Activated CD4-positive, alpha-beta memory T cell treated with anti-CD3 and anti-CD28 coated beads, Interleukin-2, amount 10 ng/mL, durations not matched to agents 7 days and 5 days (primary cell): ENCODE measurements at regions of chr19 and their contacts with region 1.

Region 1: DNA sequence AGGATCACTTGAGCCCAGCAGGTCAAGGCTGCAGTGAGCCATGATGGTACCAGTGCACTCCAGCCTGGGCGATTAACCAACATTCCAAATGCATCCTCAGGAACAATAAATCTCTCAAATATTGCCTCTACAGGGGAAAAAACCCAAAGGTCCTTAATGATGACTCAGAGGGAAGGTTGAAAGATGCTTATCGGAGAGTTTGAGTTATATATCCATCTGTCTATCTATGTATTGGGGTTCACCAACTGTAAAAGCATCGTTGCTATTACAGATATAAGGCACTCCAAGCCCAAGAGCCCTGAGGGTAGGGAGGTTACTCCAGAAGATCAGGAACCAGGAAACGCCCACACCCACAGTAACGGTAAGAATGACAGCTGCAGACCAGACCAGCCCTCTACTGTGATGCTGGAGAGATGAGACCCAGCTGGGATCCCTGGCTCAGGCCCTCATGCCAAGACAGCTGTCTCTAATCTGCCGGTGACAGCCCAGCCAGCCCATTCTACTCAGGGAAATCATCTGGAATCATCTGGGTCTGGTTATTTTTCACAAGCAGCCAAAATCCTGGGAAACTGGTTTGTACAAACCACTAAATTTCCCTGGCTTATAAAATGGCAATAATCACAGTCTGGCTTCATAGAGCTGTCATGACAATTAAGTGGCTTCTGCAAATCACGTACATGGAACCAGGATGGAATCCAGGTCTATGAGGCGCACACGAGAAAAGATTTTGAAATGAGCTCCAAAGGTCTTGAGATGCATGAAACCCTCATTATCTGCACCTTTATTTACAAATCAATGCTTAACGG is 23.8 kb downstream of the TEX101 start:
- DNase-seq: peak; percentile 34
- H3K4me3 Mint-ChIP-seq: peak overlapping the region; percentile 37
- H3K27ac Mint-ChIP-seq: peak overlapping the region; percentile 97
- H3K4me1 Mint-ChIP-seq: peaks cover 41% of the 10 kb centered on the region
- H3K27me3 Mint-ChIP-seq: peaks cover 5% of the 10 kb centered on the region

Region 2: GRCh38 chr19:43463381-43464136 is 25.1 kb after region 1 on chr19:
- CTCF ChIA-PET with region 1: interaction called, 21 read pairs
- POLR2A ChIA-PET with region 1: interaction called, 23 read pairs
- DNase-seq: peak; percentile 99
- H3K4me3 Mint-ChIP-seq: peak overlapping the region; percentile 88
- H3K27ac Mint-ChIP-seq: peak overlapping the region; percentile 93
- H3K4me1 Mint-ChIP-seq: peaks cover 34% of the 10 kb centered on the region
- H3K27me3 Mint-ChIP-seq: peaks cover 12% of the 10 kb centered on the region

Region 3: DNA sequence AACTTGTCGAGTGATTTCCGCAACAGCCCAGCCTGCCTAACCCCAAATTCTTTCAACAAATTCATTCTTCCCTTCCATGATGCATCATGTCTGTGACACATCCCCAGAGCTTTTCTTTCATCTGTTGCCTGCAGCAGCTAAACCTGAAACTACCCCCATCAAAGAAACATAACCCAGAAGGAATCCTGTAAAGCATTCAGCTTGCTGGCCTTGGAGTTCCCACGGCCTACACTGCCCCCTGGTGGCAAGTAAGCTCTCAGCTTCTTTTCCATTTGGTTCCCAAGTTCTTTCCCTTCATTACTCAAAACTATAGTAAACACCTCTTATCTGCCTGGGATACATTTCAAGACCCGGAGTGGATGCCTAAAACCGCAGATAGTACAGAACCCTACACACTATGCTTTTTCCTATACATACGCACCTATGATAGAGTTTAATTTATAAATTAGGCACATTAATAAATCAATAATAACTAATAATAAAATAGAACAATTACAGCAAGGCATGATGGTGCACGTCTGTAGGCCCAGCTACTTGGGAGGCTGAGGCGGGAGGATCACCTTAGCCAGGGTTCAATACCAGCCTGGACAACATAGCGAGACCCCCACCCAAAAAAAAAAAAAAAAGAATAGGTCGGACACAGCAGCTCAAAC is 81.1 kb after region 1 on chr19:
- CTCF ChIA-PET with region 1: interaction called, 198 read pairs
- POLR2A ChIA-PET with region 1: interaction called, 23 read pairs
- DNase-seq: peak; percentile 80
- H3K4me3 Mint-ChIP-seq: no peak overlapping the region
- H3K27ac Mint-ChIP-seq: no peak overlapping the region
- H3K4me1 Mint-ChIP-seq: peaks cover 19% of the 10 kb centered on the region
- H3K27me3 Mint-ChIP-seq: no peaks in the 10 kb centered on the region

Region 4: DNA sequence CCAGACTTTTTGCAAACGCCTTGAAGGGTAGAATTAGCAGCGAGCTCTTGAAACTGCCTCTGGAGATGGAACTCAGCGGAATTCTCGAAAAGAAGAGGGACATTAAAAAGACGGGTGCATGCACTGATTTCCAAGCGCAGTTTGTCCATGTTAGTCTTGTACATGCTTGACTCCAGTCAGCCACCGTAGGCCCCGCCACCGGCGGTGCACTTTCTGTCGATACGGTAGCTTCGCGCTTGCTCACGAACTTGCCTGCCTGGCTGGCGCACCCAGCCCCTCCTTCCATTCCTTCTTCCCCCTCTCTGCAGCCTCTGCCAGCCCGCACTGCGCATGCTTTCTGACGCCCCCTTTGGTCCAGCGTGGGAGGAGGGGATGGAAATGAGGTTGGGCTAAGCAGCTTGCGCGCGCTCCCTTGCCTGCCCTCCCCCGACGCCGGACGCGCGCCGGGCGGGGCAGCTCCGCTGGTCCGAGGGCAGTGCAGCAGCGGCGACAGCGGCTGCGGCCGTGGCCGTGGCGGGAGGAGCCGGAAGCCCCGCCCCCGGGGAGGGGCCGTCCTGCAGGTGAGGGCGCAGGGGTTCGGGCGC is 94.6 kb after region 1 on chr19 and contains the start of gene ZNF575:
- CTCF ChIA-PET with region 1: interaction called, 4 read pairs
- POLR2A ChIA-PET with region 1: interaction called, 19 read pairs
- DNase-seq: peak; percentile 89
- H3K4me3 Mint-ChIP-seq: peak within 1 kb of the TSS; percentile 86
- H3K27ac Mint-ChIP-seq: peak within 1 kb of the TSS; percentile 98
- H3K4me1 Mint-ChIP-seq: peaks cover 26% of the 10 kb centered on the region
- H3K27me3 Mint-ChIP-seq: no peaks in the 10 kb centered on the region
- total RNA-seq, gene ZNF575: 4.1 to 4.8 TPM